Aorta (tissue), 5 donors: ENCODE measurements at regions of chr3 and their contacts with region 1.

Region 1: GRCh38 chr3:19420159-19420558 is 271.8 kb downstream of the KCNH8 start:
- DNase-seq: no peak
- ATAC-seq: peak; percentile 64
- H3K4me3 ChIP-seq: no peak overlapping the region
- H3K27ac ChIP-seq: peak overlapping the region in 1 of 2 donors; percentile 76
- H3K4me1 ChIP-seq: no peaks in the 10 kb centered on the region
- H3K27me3 ChIP-seq: no peaks in the 10 kb centered on the region

Region 2: DNA sequence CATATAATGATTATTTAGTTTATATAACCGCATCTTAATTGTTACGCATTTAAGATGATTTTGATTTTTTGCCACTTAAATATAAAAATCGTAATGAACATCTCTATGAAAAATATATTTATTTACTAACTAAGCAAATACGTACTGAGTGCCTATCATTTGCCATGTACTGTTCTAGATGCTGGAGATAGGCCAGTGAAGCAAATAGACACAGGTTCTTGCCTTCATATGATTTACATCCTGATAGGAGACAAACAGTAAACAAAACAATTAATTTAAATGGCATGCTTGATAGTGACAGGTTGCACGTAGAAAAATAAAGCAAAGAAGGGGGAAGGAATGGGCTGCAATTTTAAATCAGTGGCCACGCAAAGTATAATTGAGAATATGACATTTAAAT is 54.7 kb before region 1 on chr3:
- intact Hi-C with region 1: loop called in 1 of 2 experiments (anchors 5 kb)
- DNase-seq: no peak
- ATAC-seq: no peak
- H3K4me3 ChIP-seq: no peak overlapping the region
- H3K27ac ChIP-seq: no peak overlapping the region
- H3K4me1 ChIP-seq: peaks cover 0 to 1% of the 10 kb centered on the region in 2 donors
- H3K27me3 ChIP-seq: no peaks in the 10 kb centered on the region

Region 3: GRCh38 chr3:19457454-19457853 is 37.3 kb after region 1 on chr3:
- intact Hi-C with region 1: loop called in 1 of 2 experiments (anchors 5 kb)
- DNase-seq: no peak
- ATAC-seq: no peak
- H3K4me3 ChIP-seq: no peak overlapping the region
- H3K27ac ChIP-seq: no peak overlapping the region
- H3K4me1 ChIP-seq: peaks cover 0 to 8% of the 10 kb centered on the region in 2 donors
- H3K27me3 ChIP-seq: no peaks in the 10 kb centered on the region